ENCODE measurements at regions of chr16 and their contacts with region 1.

Region 1: GRCh38 chr16:87391950-87392822 is at the start of gene MAP1LC3B:
- DNase-seq: peak; percentile 94
- ATAC-seq: peak; percentile 83
- H3K4me3 ChIP-seq: peak within 1 kb of the TSS; percentile 75
- H3K27ac ChIP-seq: peak within 1 kb of the TSS; percentile 90
- H3K4me1 ChIP-seq: peaks cover 7% of the 10 kb centered on the region
- H3K27me3 ChIP-seq: no peaks in the 10 kb centered on the region
- CTCF ChIP-seq: no peak
- POLR2A ChIP-seq: peak; percentile 99
- RAD21 ChIP-seq: no peak
- total RNA-seq, gene MAP1LC3B: 23.5 and 25.3 TPM in 2 replicates

Region 2: DNA sequence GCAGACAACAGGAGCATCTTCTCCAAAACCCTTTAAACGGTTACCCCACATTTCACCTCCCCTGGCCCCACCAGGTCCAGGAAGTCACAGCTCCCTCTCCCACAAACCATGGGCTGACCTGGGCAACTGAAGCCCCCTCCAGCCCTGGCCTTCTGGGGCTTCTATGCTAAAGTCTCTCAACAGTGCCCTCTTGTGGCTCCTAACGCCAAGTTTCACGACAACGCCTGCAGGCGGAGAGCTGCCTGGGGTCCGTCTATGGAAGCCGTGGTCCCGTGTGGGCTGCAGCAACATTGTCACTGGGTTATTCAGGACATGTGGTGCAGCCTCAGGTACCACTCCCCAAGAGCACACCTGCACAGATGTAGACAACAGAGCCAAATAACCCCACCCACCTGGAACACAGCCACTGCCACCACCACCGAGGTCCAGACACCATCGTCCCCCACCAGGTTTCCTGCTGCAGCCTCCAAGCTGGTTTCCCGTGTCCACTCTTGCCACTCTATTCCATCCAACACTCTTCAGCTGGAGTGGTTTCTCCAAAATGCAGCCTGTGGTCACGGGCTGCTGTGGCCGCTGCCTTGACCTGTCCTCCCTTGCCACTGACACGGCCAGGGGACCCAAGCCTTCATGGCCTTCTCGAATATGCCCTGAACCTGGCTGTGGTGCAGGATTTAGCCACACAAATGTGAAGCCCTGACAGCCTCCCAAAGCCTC is 94.1 kb before region 1 on chr16:
- CTCF ChIA-PET with region 1: interaction called, 11 read pairs
- POLR2A ChIA-PET with region 1: no interaction called
- dilution Hi-C with region 1: no loop called
- in situ Hi-C with region 1: no loop called
- intact Hi-C with region 1: no loop called
- DNase-seq: peak; percentile 10
- ATAC-seq: peak; percentile 85
- H3K4me3 ChIP-seq: no peak overlapping the region
- H3K27ac ChIP-seq: no peak overlapping the region
- H3K4me1 ChIP-seq: no peaks in the 10 kb centered on the region
- H3K27me3 ChIP-seq: no peaks in the 10 kb centered on the region
- CTCF ChIP-seq: peak; percentile 58
- POLR2A ChIP-seq: no peak
- RAD21 ChIP-seq: peak; percentile 46

Region 3: DNA sequence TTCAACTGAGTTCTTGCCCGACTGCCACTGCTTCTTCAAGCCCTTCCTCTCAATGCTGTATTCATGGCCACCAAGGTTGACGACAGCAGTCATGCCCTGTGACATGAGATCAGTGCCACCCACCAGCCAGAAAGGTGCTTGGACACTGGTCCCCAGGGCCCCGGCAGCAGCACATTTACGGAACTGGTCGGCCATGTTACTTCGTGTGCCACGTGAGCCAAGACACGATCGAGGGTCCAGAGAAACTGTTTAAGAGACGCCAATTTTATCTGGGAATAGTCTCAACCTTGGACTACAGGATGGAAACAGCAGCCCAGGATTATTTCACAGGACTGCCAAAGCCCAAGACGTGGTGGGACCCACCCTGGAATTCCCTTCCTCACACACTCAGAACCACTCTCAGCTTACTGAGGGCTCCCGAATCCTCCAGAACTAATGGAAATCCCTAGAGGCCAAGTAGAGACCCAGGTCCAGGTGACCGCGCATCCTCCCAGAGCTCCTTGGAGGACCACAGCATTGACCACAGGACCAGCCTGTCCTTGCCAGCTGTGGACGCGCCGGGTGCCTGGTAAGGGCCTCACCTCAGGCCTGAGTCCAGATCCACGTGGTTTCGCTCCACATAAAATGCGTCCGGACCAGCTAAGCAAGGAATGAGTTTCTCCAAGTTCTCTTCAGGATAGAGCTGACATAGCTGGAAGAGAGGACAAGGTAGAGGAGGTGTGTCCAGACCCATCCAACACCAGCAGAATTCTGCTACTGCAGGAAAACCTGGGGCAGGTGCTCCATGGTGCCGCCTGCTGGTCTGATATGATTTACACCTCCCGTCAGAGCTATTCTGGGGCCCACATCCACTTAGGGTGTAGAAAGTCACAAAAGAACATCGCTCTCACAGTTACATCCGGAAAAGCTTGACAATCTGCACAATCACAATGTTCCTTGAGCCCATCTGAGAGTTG is 28.1 kb after region 1 on chr16:
- CTCF ChIA-PET with region 1: no interaction called
- POLR2A ChIA-PET with region 1: no interaction called
- dilution Hi-C with region 1: no loop called
- in situ Hi-C with region 1: no loop called
- intact Hi-C with region 1: no loop called
- DNase-seq: no peak
- ATAC-seq: no peak
- H3K4me3 ChIP-seq: no peak overlapping the region
- H3K27ac ChIP-seq: no peak overlapping the region
- H3K4me1 ChIP-seq: no peaks in the 10 kb centered on the region
- H3K27me3 ChIP-seq: no peaks in the 10 kb centered on the region
- CTCF ChIP-seq: no peak; the same call in 1 of the 2 replicates
- POLR2A ChIP-seq: no peak
- RAD21 ChIP-seq: no peak

Region 4: GRCh38 chr16:87471278-87472141 is 79.3 kb after region 1 on chr16:
- CTCF ChIA-PET with region 1: no interaction called
- POLR2A ChIA-PET with region 1: no interaction called
- dilution Hi-C with region 1: no loop called
- in situ Hi-C with region 1: no loop called
- intact Hi-C with region 1: no loop called
- DNase-seq: no peak
- ATAC-seq: no peak
- H3K4me3 ChIP-seq: no peak overlapping the region
- H3K27ac ChIP-seq: no peak overlapping the region
- H3K4me1 ChIP-seq: peaks cover 11% of the 10 kb centered on the region
- H3K27me3 ChIP-seq: no peaks in the 10 kb centered on the region
- CTCF ChIP-seq: no peak
- POLR2A ChIP-seq: no peak
- RAD21 ChIP-seq: no peak

Measured in IMR-90 (cell line).